Naive thymus-derived CD4-positive, alpha-beta T cell (primary cell): ENCODE measurements at regions of chrX and their contacts with region 1.

Region 1: DNA sequence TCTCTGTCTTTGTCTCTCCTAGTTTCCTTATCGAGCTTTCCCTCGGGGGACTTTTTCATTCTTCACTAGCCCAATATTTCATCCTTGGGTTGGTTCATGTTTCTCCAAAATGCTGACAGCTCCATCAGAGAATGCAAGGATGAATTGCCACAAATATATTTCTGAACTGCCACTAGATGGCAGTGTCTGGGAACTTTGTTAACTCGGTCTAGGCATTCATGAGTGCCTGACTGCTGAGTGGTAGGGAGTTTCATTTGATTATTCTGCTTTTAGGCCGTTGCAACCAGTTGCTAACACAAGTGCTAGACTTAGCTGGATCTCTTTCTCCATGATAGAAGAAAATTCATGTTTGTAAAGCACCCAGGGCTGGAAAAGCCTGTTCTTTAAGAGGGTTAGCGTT is 73.5 kb upstream of the RAP2C start:
- DNase-seq: peak in 7 of 9 donors; percentile 9 to 53 (median 42)
- ATAC-seq: peak; percentile 63
- H3K4me3 ChIP-seq: no peak overlapping the region
- H3K4me3 Mint-ChIP-seq: no peak overlapping the region
- H3K27ac ChIP-seq: no peak overlapping the region
- H3K27ac Mint-ChIP-seq: no peak overlapping the region
- H3K4me1 ChIP-seq: no peaks in the 10 kb centered on the region
- H3K4me1 Mint-ChIP-seq: peaks cover 0 to 2% (median 0%) of the 10 kb centered on the region in 7 donors
- H3K27me3 ChIP-seq: no peaks in the 10 kb centered on the region
- H3K27me3 Mint-ChIP-seq: no peaks in the 10 kb centered on the region

Region 2: GRCh38 chrX:131841496-131842410 is 451.0 kb before region 1 on chrX:
- CTCF ChIA-PET with region 1: no interaction called
- POLR2A ChIA-PET with region 1: no interaction called
- intact Hi-C with region 1: loop called (anchors 5 to 10 kb)
- DNase-seq: peak in 8 of 9 donors; percentile 5 to 67 (median 49)
- ATAC-seq: peak; percentile 81
- H3K4me3 ChIP-seq: no peak overlapping the region
- H3K4me3 Mint-ChIP-seq: peak overlapping the region in 1 of 10 donors; percentile 56
- H3K27ac ChIP-seq: no peak overlapping the region
- H3K27ac Mint-ChIP-seq: no peak overlapping the region
- H3K4me1 ChIP-seq: no peaks in the 10 kb centered on the region
- H3K4me1 Mint-ChIP-seq: peaks cover 0 to 9% (median 0%) of the 10 kb centered on the region in 7 donors
- H3K27me3 ChIP-seq: no peaks in the 10 kb centered on the region
- H3K27me3 Mint-ChIP-seq: peaks cover 0 to 2% (median 0%) of the 10 kb centered on the region in 5 donors

Region 3: DNA sequence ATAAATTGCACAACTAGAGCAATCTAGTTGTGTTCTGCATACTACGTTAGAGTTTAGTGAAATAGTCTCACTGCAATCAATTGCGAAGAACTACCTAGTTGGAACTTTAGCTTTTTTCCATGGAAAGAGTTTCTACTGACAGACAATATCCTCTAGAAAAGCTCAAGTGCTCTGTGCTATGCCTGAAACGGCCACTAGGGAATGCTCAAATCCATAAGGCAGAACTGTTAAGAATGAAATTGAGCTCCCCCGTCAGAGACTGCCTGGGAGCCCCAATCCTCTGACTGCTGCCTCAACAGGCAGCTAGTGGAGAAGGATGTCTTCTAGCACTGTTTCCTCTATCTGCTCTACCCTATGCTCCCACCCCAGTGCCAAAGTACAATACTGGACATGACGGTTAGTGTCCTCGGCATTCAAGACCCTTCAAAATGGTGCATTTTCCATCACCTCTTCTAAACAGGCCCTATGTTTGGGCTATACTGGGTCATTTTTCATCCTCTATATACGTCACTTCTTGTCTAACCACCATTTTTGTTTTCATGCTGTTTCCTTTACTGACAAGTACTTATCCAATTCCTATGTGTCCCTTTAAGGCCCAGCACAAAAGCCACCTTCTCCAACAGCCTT is 200.2 kb before region 1 on chrX:
- CTCF ChIA-PET with region 1: interaction called, 3 read pairs
- POLR2A ChIA-PET with region 1: no interaction called
- intact Hi-C with region 1: loop called in 1 of 2 experiments (anchors 5 kb)
- DNase-seq: peak; percentile 5 to 52 (median 33)
- ATAC-seq: peak; percentile 83
- H3K4me3 ChIP-seq: no peak overlapping the region
- H3K4me3 Mint-ChIP-seq: no peak overlapping the region
- H3K27ac ChIP-seq: no peak overlapping the region
- H3K27ac Mint-ChIP-seq: no peak overlapping the region
- H3K4me1 ChIP-seq: no peaks in the 10 kb centered on the region
- H3K4me1 Mint-ChIP-seq: peaks cover 0 to 11% (median 7%) of the 10 kb centered on the region in 7 donors
- H3K27me3 ChIP-seq: no peaks in the 10 kb centered on the region
- H3K27me3 Mint-ChIP-seq: peaks cover 0 to 7% (median 0%) of the 10 kb centered on the region in 5 donors

Region 4: GRCh38 chrX:132488819-132489577 is 196.2 kb after region 1 on chrX and contains the start of gene MBNL3:
- CTCF ChIA-PET with region 1: interaction called, 4 read pairs
- POLR2A ChIA-PET with region 1: interaction called, 5 read pairs
- intact Hi-C with region 1: loop called (anchors 1 to 10 kb)
- DNase-seq: peak; percentile 35 to 78 (median 70)
- ATAC-seq: peak; percentile 77
- H3K4me3 ChIP-seq: peak within 1 kb of the TSS; percentile 82
- H3K4me3 Mint-ChIP-seq: peak within 1 kb of the TSS; percentile 93 to 99 (median 96)
- H3K27ac ChIP-seq: peak within 1 kb of the TSS; percentile 83
- H3K27ac Mint-ChIP-seq: peak within 1 kb of the TSS; percentile 78 to 98 (median 94)
- H3K4me1 ChIP-seq: peaks cover 4 to 15% of the 10 kb centered on the region in 2 donors
- H3K4me1 Mint-ChIP-seq: peaks cover 16 to 59% (median 44%) of the 10 kb centered on the region in 7 donors
- H3K27me3 ChIP-seq: no peaks in the 10 kb centered on the region
- H3K27me3 Mint-ChIP-seq: peaks cover 0 to 10% (median 0%) of the 10 kb centered on the region in 5 donors
- total RNA-seq, gene MBNL3: 20.8 to 34.0 (median 29.7) TPM

Region 5: GRCh38 chrX:132615391-132616131 is 322.8 kb after region 1 on chrX:
- CTCF ChIA-PET with region 1: interaction called, 38 read pairs
- POLR2A ChIA-PET with region 1: no interaction called
- intact Hi-C with region 1: loop called (anchors 1 kb)
- DNase-seq: peak; percentile 5 to 39 (median 22)
- ATAC-seq: peak; percentile 70
- H3K4me3 ChIP-seq: no peak overlapping the region
- H3K4me3 Mint-ChIP-seq: no peak overlapping the region
- H3K27ac ChIP-seq: no peak overlapping the region
- H3K27ac Mint-ChIP-seq: peak overlapping the region in 1 of 9 donors; percentile 4
- H3K4me1 ChIP-seq: no peaks in the 10 kb centered on the region
- H3K4me1 Mint-ChIP-seq: peaks cover 0 to 3% (median 0%) of the 10 kb centered on the region in 7 donors
- H3K27me3 ChIP-seq: no peaks in the 10 kb centered on the region
- H3K27me3 Mint-ChIP-seq: peaks cover 0 to 3% (median 0%) of the 10 kb centered on the region in 5 donors